ENCODE measurements at regions of chr1 and their contacts with region 1.

Region 1: DNA sequence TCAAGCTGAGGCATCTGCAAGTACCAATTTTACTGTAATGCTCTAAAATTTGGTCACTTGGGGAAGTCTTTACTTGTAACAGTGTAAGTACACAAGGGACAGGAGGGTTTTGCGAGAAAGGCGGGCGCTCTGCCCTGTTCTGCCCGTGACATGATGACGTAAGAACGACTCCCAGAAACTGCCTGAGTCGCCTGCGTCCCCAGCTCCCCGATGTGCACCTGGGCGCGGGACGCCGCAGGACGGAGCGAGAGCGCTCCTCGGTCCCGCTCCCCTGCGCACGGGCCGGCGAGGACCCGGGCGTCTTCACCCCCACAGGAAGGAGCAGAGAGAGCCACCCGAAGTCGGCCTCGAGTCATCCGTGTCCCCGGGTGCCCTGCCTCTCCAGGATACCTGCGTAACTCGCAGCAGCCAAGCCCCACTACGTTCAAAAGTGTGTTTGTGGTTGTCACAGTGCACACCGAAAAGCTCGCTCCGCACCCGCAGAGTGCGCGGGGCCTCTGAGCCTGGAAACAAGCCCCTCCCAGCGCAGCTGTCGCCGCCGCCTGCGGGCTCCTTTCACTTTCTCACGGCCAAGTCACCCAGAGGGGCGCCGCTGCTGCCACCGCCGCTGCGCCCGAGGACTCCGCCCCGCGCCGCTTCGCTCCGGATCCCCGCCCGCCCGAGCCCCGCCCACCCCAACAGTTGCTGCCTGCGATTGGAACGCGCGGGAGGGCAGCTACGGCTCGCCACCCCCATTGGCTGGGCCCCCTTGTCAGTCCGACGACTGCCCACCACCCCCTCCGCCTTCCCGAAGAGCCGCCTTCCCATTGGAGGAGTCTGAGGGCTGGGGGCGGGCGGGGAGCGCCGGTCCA is 3.2 kb upstream of the ZBTB18 start:
- DNase-seq: peak; percentile 99
- ATAC-seq: peak; percentile 95 to 99 (median 98)
- H3K4me3 ChIP-seq: peak overlapping the region; percentile 67 to 99 (median 85)
- H3K27ac ChIP-seq: peak overlapping the region; percentile 89 to 99 (median 98)
- H3K4me1 ChIP-seq: peaks cover 0 to 41% (median 32%) of the 10 kb centered on the region in 9 donors
- H3K27me3 ChIP-seq: no peaks in the 10 kb centered on the region
- CTCF ChIP-seq: peak in 2 of 9 donors; percentile 7 to 12

Region 2: DNA sequence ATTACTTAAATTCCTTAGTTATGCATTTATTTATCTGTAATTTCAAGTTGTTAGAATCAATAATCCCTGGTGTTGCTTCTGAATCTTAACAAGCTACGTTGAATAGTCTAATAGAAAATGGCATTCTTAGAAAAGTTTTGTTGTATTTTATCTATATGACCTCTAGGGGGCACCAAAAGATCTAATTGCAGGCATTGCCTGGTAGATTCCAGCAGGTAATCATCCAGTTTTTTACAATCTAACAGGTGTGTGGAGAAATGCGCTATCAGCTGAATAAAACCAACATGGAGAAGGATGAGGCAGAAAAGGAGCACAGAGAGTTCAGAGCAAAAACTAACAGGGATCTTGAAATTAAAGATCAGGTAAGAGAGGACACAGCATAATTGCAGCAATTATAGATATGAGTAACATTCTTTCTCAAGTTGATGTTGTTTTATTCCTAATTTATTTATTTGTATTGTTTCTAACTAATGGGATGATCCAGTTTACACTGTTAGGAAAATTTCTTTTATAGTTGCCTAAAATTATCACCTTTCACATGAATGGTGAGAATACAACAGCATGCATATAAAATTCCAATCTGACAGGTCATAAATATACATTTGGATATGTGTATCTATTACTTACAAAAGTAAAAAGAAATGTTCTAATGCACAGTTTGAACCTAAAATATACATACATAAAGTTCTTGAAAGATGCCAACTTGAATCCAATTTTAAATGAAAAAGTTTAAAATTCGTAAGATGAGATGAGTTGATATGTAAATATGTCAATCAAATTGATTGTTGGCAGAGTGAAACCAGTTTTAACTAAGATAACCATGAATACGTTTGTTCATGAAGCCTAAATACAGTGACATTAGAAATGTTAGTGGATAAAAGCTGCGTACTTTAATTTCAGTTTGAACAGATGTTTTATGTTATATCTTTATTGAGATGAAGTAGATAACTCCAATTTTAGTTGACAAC is 703.6 kb before region 1 on chr1:
- intact Hi-C with region 1: loop called in 1 of 10 experiments (anchors 10 kb)
- DNase-seq: no peak
- ATAC-seq: peak in 2 of 8 donors; percentile 34 to 53
- H3K4me3 ChIP-seq: no peak overlapping the region
- H3K27ac ChIP-seq: no peak overlapping the region
- H3K4me1 ChIP-seq: peaks cover 0 to 6% (median 0%) of the 10 kb centered on the region in 9 donors
- H3K27me3 ChIP-seq: no peaks in the 10 kb centered on the region
- CTCF ChIP-seq: peak; percentile 58 to 84 (median 74)

Region 3: GRCh38 chr1:243864913-243865312 is 182.9 kb before region 1 on chr1:
- intact Hi-C with region 1: no loop called
- DNase-seq: no peak
- ATAC-seq: no peak
- H3K4me3 ChIP-seq: no peak overlapping the region
- H3K27ac ChIP-seq: no peak overlapping the region
- H3K4me1 ChIP-seq: no peaks in the 10 kb centered on the region
- H3K27me3 ChIP-seq: peaks cover 0 to 9% (median under 1%) of the 10 kb centered on the region in 7 donors
- CTCF ChIP-seq: no peak

Region 4: DNA sequence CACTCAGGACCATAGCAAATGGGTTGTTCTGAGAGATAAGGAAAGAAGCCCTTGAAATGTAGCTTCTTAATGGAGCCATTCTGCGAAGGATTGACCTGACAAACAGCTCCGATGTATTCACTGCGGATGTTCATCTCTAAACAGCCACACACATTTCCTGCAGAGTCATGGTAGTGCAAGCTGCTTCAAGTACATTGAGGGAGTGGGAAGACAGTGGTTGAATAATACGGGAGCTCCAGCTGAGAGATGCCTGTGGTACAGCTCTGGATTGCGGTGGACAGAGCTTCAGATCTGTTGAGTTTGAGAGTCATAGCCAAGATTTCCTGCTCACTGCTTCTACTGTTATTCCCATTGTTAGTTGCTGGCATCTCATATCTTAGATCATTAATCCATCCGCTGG is 89.9 kb after region 1 on chr1:
- intact Hi-C with region 1: loop called in 1 of 10 experiments (anchors 5 kb)
- DNase-seq: no peak
- ATAC-seq: peak in 4 of 8 donors; percentile 16 to 31 (median 21)
- H3K4me3 ChIP-seq: peak overlapping the region in 1 of 10 donors; percentile 17
- H3K27ac ChIP-seq: peak overlapping the region in 9 of 10 donors; percentile 51 to 86 (median 67)
- H3K4me1 ChIP-seq: peaks cover 0 to 28% (median 9%) of the 10 kb centered on the region in 9 donors
- H3K27me3 ChIP-seq: peaks cover 0 to 11% (median 0%) of the 10 kb centered on the region in 7 donors
- CTCF ChIP-seq: no peak

Region 5: GRCh38 chr1:244391761-244392160 is 343.9 kb after region 1 on chr1:
- intact Hi-C with region 1: no loop called
- DNase-seq: no peak
- ATAC-seq: no peak
- H3K4me3 ChIP-seq: no peak overlapping the region
- H3K27ac ChIP-seq: no peak overlapping the region
- H3K4me1 ChIP-seq: no peaks in the 10 kb centered on the region
- H3K27me3 ChIP-seq: no peaks in the 10 kb centered on the region
- CTCF ChIP-seq: no peak